ENCODE measurements at regions of chr19 and their contacts with region 1.

Region 1: DNA sequence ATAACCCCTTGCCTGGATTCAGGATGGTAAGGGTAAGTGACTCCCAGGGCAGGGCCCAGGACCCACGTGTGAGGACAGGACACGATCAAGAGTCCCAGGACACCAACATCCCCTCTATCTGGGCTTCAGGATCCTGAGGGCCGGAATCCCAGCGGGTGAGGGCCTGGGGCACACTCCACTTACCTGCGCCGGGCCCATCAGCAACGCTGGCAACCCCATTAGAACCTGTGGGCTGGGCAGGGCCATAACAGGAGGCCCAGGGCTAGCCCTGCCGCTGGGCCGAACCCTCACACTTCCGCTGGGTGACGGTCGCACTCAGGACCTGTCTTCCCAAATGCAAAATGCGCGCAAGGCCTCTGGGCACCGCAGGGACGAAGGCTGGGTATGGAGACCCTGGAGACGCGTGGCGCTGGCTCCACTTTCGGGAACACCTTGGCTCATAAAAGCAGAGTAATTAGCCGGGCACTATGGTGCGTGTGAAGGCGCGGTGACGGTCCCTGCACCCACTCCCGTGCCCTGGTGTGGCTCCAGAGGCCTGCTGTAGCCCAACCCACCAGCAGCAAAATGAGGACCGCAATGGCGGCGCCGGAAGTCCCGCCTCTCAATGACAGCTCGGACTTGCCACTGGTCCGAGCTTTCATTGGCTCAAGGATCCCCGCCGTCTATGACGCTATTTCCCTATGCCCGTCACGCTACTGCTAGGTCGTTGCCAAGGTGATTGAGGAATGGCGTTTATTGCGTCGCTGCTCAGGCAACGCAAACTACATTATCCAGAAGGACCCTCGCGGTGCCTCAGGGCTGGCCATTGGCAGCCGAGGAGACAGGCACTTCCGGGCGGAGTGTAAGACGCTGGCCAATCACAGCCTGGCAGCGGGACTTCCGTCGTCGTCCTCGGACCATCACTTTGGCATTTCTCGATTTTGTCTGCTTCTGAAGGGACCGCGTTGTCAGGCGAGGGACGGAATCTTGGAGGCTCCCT is at the start of gene ZNF132:
- DNase-seq: peak; percentile 92 to 99
- ATAC-seq: peak; percentile 94 to 98 (median 96)
- H3K4me3 ChIP-seq: peak within 1 kb of the TSS; percentile 60
- H3K4me3 Mint-ChIP-seq: peak within 1 kb of the TSS; percentile 98
- H3K27ac ChIP-seq: peak within 1 kb of the TSS; percentile 87
- H3K27ac Mint-ChIP-seq: peak within 1 kb of the TSS; percentile 97 to 98
- H3K4me1 ChIP-seq: peaks cover 19% of the 10 kb centered on the region
- H3K4me1 Mint-ChIP-seq: peaks cover 25 to 27% of the 10 kb centered on the region in 2 donors
- H3K27me3 ChIP-seq: no peaks in the 10 kb centered on the region
- H3K27me3 Mint-ChIP-seq: peaks cover 0 to 6% of the 10 kb centered on the region in 2 donors
- CTCF ChIP-seq: no peak
- total RNA-seq, gene ZNF132: 0.88 to 1.6 (median 1.5) TPM

Region 2: GRCh38 chr19:58380722-58381466 is 59.0 kb before region 1 on chr19 and contains the start of gene ZNF837:
- intact Hi-C with region 1: loop called (anchors 1 kb)
- DNase-seq: peak; percentile 95 to 100
- ATAC-seq: peak; percentile 85 to 94 (median 86)
- H3K4me3 ChIP-seq: peak within 1 kb of the TSS; percentile 50
- H3K4me3 Mint-ChIP-seq: peak within 1 kb of the TSS; percentile 89
- H3K27ac ChIP-seq: peak within 1 kb of the TSS; percentile 92
- H3K27ac Mint-ChIP-seq: peak within 1 kb of the TSS; percentile 93 to 94
- H3K4me1 ChIP-seq: peaks cover 37% of the 10 kb centered on the region
- H3K4me1 Mint-ChIP-seq: peaks cover 13 to 29% of the 10 kb centered on the region in 2 donors
- H3K27me3 ChIP-seq: no peaks in the 10 kb centered on the region
- H3K27me3 Mint-ChIP-seq: no peaks in the 10 kb centered on the region
- CTCF ChIP-seq: no peak
- total RNA-seq, gene ZNF837: 0.63 to 1.4 (median 1.3) TPM

Region 3: DNA sequence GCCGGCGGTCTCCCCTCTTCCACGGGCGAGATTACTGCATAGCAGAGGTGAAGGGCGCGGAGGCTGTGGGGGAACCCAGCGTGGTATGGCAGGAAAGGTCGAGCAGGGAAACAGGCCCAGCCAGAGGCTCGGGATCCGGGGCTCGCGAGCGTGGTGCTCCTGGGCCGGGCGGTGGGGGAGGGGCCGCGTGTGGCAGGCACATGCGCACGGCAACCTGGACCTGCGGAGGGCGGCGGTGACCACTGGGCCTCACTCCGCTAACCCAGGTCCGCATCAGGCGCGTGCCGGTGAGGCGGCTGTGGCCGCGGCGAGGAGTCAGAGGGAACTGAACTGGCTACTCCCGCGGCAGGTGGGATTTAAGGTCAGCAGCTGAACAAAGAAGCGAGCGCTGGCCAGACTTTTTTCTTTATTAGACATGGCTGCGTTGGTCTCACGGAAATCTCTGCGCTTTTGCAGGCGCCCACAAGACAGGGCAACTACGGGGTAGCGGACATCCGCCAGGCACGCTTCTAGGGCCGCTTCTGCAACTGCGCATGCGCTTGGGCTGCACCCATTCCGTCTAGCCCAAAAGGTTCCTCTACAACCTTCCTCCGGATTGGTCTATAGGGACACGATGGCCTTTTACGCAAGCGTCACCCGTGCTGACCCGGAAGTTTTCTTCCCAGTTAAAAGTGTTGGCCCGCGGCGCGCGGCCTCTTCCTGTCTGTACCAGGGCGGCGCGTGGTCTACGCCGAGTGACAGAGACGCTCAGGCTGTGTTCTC is 53.1 kb before region 1 on chr19 and contains the start of gene RPS5:
- intact Hi-C with region 1: loop called (anchors 1 kb)
- DNase-seq: peak; percentile 89 to 100
- ATAC-seq: peak; percentile 85 to 96 (median 90)
- H3K4me3 ChIP-seq: peak within 1 kb of the TSS; percentile 55
- H3K4me3 Mint-ChIP-seq: peak within 1 kb of the TSS; percentile 97
- H3K27ac ChIP-seq: peak within 1 kb of the TSS; percentile 96
- H3K27ac Mint-ChIP-seq: peak within 1 kb of the TSS; percentile 98
- H3K4me1 ChIP-seq: peaks cover 36% of the 10 kb centered on the region
- H3K4me1 Mint-ChIP-seq: peaks cover 19 to 42% of the 10 kb centered on the region in 2 donors
- H3K27me3 ChIP-seq: no peaks in the 10 kb centered on the region
- H3K27me3 Mint-ChIP-seq: no peaks in the 10 kb centered on the region
- CTCF ChIP-seq: no peak
- total RNA-seq, gene RPS5: 406 to 580 (median 525) TPM

Region 4: GRCh38 chr19:58400916-58401839 is 38.7 kb before region 1 on chr19:
- intact Hi-C with region 1: loop called (anchors 1 kb)
- DNase-seq: peak; percentile 98 to 100
- ATAC-seq: peak; percentile 94 to 98 (median 96)
- H3K4me3 ChIP-seq: peak overlapping the region; percentile 76
- H3K4me3 Mint-ChIP-seq: peak overlapping the region; percentile 92
- H3K27ac ChIP-seq: peak overlapping the region; percentile 98
- H3K27ac Mint-ChIP-seq: peak overlapping the region; percentile 92 to 93
- H3K4me1 ChIP-seq: peaks cover 18% of the 10 kb centered on the region
- H3K4me1 Mint-ChIP-seq: peaks cover 14 to 15% of the 10 kb centered on the region in 2 donors
- H3K27me3 ChIP-seq: peaks cover 10% of the 10 kb centered on the region
- H3K27me3 Mint-ChIP-seq: peaks cover 0 to 19% of the 10 kb centered on the region in 2 donors
- CTCF ChIP-seq: no peak

Region 5: DNA sequence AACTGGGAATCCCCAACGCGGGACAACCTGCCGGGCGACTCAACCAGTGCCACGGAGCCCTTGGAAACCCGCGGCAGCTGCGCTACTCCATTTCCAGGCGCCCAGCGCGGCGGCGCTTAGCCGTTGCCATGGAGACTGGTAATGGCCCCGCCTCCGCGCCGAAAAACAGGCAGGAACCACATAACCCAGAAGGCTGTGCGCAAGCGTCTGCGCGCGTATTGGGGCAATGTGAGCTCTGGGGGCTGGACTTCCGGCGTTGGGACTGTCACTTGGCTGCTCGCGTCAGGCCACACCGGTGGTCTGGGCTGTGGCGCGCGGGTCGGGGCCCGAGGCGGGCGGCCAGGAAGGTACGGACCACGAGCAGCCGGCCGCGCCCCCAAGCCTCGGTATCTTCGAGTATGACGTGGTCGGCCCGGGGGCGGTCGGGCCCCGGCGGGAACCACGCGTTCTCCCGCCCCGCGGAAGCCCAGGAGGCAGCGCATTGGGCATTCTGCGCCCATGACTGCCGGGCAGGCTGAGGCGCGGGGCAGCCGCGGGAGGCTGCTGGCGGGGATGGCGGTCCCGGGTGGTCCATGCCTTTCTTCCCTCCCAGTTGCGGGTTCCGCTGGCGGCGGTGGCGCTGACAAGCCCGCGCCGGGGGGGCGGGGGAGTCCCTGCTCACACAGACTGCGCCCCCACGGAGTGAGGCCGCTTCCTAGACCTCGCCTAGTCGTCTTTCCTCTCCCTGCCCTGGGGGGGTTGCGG is 11.7 kb after region 1 on chr19 and contains the start of gene ZNF324B:
- intact Hi-C with region 1: loop called (anchors 1 kb)
- DNase-seq: peak; percentile 95 to 99
- ATAC-seq: peak; percentile 95 to 98 (median 95)
- H3K4me3 ChIP-seq: peak within 1 kb of the TSS; percentile 53
- H3K4me3 Mint-ChIP-seq: peak within 1 kb of the TSS; percentile 91
- H3K27ac ChIP-seq: peak within 1 kb of the TSS; percentile 52
- H3K27ac Mint-ChIP-seq: peak within 1 kb of the TSS; percentile 84 to 89
- H3K4me1 ChIP-seq: peaks cover 15% of the 10 kb centered on the region
- H3K4me1 Mint-ChIP-seq: peaks cover 19 to 26% of the 10 kb centered on the region in 2 donors
- H3K27me3 ChIP-seq: no peaks in the 10 kb centered on the region
- H3K27me3 Mint-ChIP-seq: peaks cover 18 to 30% of the 10 kb centered on the region in 2 donors
- CTCF ChIP-seq: no peak
- total RNA-seq, gene ZNF324B: 10.4 to 11.4 (median 11.4) TPM

Region 6: GRCh38 chr19:58466760-58467589 is 27.1 kb after region 1 on chr19 and contains the start of gene ZNF324:
- intact Hi-C with region 1: loop called (anchors 1 kb)
- DNase-seq: peak; percentile 97 to 99
- ATAC-seq: peak; percentile 92 to 97 (median 95)
- H3K4me3 ChIP-seq: peak within 1 kb of the TSS; percentile 58
- H3K4me3 Mint-ChIP-seq: peak within 1 kb of the TSS; percentile 89
- H3K27ac ChIP-seq: peak within 1 kb of the TSS; percentile 73
- H3K27ac Mint-ChIP-seq: peak within 1 kb of the TSS; percentile 84 to 92
- H3K4me1 ChIP-seq: peaks cover 18% of the 10 kb centered on the region
- H3K4me1 Mint-ChIP-seq: peaks cover 16 to 21% of the 10 kb centered on the region in 2 donors
- H3K27me3 ChIP-seq: no peaks in the 10 kb centered on the region
- H3K27me3 Mint-ChIP-seq: no peaks in the 10 kb centered on the region
- CTCF ChIP-seq: no peak
- total RNA-seq, gene ZNF324: 21.3 to 23.7 (median 23.3) TPM

Region 7: GRCh38 chr19:58475714-58476497 is 36.0 kb after region 1 on chr19 and contains the start of gene ZNF446:
- intact Hi-C with region 1: loop called (anchors 2 kb)
- DNase-seq: peak; percentile 93 to 99
- ATAC-seq: peak; percentile 84 to 93 (median 88)
- H3K4me3 ChIP-seq: peak within 1 kb of the TSS; percentile 59
- H3K4me3 Mint-ChIP-seq: peak within 1 kb of the TSS; percentile 93
- H3K27ac ChIP-seq: peak within 1 kb of the TSS; percentile 90
- H3K27ac Mint-ChIP-seq: peak within 1 kb of the TSS; percentile 94 to 99
- H3K4me1 ChIP-seq: peaks cover 21% of the 10 kb centered on the region
- H3K4me1 Mint-ChIP-seq: peaks cover 8 to 18% of the 10 kb centered on the region in 2 donors
- H3K27me3 ChIP-seq: no peaks in the 10 kb centered on the region
- H3K27me3 Mint-ChIP-seq: no peaks in the 10 kb centered on the region
- CTCF ChIP-seq: no peak
- total RNA-seq, gene ZNF446: 11.9 to 14.5 (median 13.5) TPM